IMR-90 (cell line): ENCODE measurements at regions of chr6 and their contacts with region 1.

Region 1: DNA sequence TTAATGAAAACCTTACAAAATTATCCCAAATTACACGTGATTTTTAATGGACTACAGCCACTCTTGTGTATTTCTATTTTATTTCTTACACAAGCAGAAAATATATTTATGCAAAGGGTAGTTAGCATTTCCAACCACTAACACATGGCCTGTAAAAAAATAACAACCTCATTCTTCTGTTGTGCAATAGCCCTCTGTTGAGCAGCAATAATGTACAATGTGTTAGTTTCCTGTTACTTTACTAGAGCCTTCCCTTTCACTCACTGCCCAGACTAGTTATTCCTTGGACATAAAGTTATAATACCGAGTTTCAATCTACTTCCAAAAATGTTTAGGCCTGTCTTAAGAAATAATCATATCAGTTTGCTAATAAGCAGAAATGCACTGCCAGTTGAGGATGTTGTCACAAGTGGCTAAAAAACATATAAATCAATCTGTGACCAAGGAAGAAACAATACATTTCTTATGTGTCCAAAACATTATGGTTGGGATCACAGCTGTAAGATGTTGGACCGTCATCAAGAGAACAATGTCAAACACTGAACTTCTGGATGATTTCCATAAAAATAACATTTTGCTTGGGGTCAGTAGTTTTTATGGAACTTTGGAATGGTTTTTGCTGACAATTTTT is 73.6 kb upstream of the RNF146 start:
- DNase-seq: peak; percentile 62
- ATAC-seq: peak; percentile 64
- H3K4me3 ChIP-seq: no peak overlapping the region
- H3K27ac ChIP-seq: no peak overlapping the region
- H3K4me1 ChIP-seq: no peaks in the 10 kb centered on the region
- H3K27me3 ChIP-seq: no peaks in the 10 kb centered on the region
- CTCF ChIP-seq: no peak
- POLR2A ChIP-seq: no peak
- RAD21 ChIP-seq: no peak

Region 2: DNA sequence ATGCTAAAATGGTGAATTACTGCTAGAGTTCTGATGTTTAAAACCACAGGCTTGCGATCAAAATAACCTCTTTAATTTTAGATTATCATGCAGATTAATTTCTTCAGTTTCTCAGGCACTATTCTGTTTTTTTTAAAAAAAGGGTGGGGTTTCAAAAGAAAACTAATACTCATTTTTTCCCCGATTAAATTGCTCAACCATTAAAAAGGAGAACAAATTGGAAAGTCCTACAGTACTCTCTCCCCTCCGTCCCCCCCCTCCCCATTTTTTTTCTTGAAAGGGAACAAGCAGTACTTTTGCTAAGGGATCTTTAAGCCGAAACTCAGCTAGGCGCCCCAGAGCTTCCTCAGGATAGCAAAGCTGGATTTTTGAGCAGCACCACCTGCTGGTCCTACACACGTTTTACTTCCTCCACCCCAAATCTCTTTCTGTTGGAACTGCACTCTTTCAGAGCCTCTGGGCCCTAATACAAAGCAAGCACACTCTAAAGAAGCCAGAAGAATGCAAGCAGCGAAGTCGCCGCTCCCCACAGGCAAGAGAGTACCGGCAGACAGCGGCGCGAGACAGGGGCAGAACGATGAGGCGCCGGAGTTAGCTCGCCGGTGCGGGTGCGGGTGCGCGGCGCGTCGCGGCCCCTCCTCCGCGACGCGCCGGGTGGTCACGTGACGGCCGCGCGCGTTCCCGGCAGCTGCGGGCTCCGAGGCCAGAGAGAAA is 73.3 kb after region 1 on chr6 and contains the start of gene RNF146:
- CTCF ChIA-PET with region 1: interaction called, 5 read pairs
- POLR2A ChIA-PET with region 1: no interaction called
- dilution Hi-C with region 1: no loop called
- in situ Hi-C with region 1: no loop called
- intact Hi-C with region 1: loop called (anchors 2 kb)
- DNase-seq: peak; percentile 83
- ATAC-seq: peak; percentile 84
- H3K4me3 ChIP-seq: peak within 1 kb of the TSS; percentile 98
- H3K27ac ChIP-seq: peak within 1 kb of the TSS; percentile 98
- H3K4me1 ChIP-seq: no peaks in the 10 kb centered on the region
- H3K27me3 ChIP-seq: no peaks in the 10 kb centered on the region; the same call in 1 of the 2 replicates
- CTCF ChIP-seq: peak; percentile 68
- POLR2A ChIP-seq: no peak
- RAD21 ChIP-seq: peak; percentile 51
- total RNA-seq, gene RNF146: 24.0 and 35.0 TPM in 2 replicates